ENCODE measurements at regions of chr3 and their contacts with region 1.

Region 1: GRCh38 chr3:31839144-31839917 is 141.7 kb downstream of the OSBPL10 start:
- DNase-seq: no peak
- H3K4me3 ChIP-seq: no peak overlapping the region
- H3K27ac ChIP-seq: no peak overlapping the region
- H3K4me1 ChIP-seq: peaks cover 9% of the 10 kb centered on the region
- CTCF ChIP-seq: no peak

Region 2: GRCh38 chr3:31851278-31851677 is 11.9 kb after region 1 on chr3:
- CTCF ChIA-PET with region 1: interaction called, 3 read pairs
- POLR2A ChIA-PET with region 1: interaction called, 21 read pairs
- intact Hi-C with region 1: no loop called
- DNase-seq: no peak
- H3K4me3 ChIP-seq: no peak overlapping the region
- H3K27ac ChIP-seq: peak overlapping the region; percentile 12
- H3K4me1 ChIP-seq: peaks cover 69% of the 10 kb centered on the region
- CTCF ChIP-seq: no peak

Region 3: DNA sequence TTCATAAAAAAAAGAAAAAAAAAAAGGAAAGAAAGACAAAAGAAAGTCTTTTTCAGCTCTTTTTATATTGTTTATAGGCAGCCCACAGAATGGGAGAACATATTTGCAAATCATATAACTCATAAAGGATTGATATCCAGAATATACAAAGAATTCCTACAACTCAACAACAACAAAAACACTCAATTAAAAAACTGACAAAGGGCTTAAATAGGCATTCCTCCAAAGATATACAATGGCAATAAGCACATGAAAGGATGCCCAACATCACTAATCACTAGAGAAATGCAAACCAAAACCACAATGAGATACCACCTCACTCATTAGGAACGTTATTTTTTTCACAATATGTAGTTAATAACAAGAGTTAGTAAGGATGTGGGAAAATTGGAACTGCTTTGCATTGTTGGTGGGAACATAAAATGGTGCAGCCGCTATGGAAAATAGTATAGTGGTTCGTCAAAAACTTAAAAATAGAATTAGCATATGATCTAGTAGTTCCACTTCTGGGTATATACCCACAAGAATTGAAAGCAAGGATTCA is 344.9 kb after region 1 on chr3:
- CTCF ChIA-PET with region 1: no interaction called
- POLR2A ChIA-PET with region 1: no interaction called
- intact Hi-C with region 1: no loop called
- DNase-seq: no peak
- H3K4me3 ChIP-seq: no peak overlapping the region
- H3K27ac ChIP-seq: no peak overlapping the region
- H3K4me1 ChIP-seq: peaks cover 6% of the 10 kb centered on the region
- CTCF ChIP-seq: no peak